T-cell (primary cell): ENCODE measurements at regions of chr2 and their contacts with region 1.

Region 1: DNA sequence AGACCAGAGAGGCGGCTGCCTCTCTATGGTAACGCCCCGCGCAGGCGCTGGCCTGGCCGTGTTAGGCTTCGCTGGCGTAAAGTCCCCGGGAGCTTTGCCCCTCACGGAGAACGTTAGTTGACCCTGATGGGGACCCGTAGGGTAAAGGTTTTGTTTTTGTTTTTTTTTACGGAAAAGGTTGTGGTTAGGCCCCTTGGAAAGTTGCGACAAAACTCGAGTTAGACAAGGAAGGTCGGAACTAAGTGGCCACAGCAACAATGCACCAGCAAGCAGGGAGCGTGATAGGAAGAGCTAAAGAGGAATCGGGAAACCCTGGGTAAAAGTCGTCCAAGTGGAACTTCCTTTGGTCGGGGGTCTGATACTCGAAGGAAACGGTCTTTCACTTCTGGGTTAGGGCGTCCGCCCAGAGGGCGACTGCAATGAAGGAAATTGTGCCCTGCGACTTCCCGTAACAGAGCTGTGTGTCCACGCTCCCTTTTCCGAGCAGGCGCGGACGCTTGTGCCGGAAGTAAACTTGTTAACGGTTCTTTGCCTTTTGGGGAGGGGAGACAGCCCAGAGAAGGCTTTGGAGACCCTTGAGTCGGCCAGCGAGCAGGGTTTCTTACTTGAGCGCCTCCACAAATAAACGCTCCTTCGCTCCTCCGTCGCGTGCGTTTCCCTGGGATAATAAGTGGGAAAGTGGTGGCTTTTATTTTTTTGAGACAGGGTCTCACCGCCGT is 493 bp upstream of the CLASP1 start:
- DNase-seq: peak; percentile 83 to 99 (median 97)
- ATAC-seq: peak; percentile 93 to 96 (median 94)
- H3K4me3 ChIP-seq: peak overlapping the region; percentile 71 to 92
- H3K4me3 Mint-ChIP-seq: peak overlapping the region; percentile 95 to 97 (median 96)
- H3K27ac ChIP-seq: peak overlapping the region; percentile 90
- H3K27ac Mint-ChIP-seq: peak overlapping the region; percentile 99 to 100
- H3K4me1 ChIP-seq: peaks cover 20 to 26% of the 10 kb centered on the region in 2 experiments
- H3K4me1 Mint-ChIP-seq: peaks cover 68 to 86% (median 74%) of the 10 kb centered on the region in 3 donors
- H3K27me3 ChIP-seq: no peaks in the 10 kb centered on the region
- H3K27me3 Mint-ChIP-seq: no peaks in the 10 kb centered on the region

Region 2: DNA sequence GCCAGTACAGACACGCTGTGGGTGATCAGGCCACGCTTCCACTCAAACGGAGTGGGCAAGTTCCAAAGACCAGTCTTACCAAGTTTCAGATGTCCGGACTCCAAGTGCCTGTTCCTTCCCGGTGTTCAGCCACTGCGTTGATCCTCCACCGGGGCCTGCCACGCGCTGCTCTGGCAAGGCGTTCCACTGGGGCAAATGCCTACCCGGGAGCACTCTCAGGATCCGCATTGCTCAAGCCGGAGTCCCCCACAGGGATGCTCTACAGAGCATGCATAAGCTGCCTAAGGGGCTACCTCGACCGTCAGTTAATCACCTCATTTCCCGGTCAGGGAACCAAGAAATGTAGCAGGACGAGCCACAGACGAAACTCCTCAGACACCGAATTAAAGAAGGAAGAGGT is 36.5 kb after region 1 on chr2:
- CTCF ChIA-PET with region 1: no interaction called
- POLR2A ChIA-PET with region 1: no interaction called
- DNase-seq: no peak
- ATAC-seq: no peak
- H3K4me3 ChIP-seq: no peak overlapping the region
- H3K4me3 Mint-ChIP-seq: no peak overlapping the region
- H3K27ac ChIP-seq: no peak overlapping the region
- H3K27ac Mint-ChIP-seq: no peak overlapping the region
- H3K4me1 ChIP-seq: no peaks in the 10 kb centered on the region
- H3K4me1 Mint-ChIP-seq: peaks cover 0 to 2% (median 0%) of the 10 kb centered on the region in 3 donors
- H3K27me3 ChIP-seq: peaks cover 0 to 2% of the 10 kb centered on the region in 2 experiments
- H3K27me3 Mint-ChIP-seq: no peaks in the 10 kb centered on the region

Region 3: DNA sequence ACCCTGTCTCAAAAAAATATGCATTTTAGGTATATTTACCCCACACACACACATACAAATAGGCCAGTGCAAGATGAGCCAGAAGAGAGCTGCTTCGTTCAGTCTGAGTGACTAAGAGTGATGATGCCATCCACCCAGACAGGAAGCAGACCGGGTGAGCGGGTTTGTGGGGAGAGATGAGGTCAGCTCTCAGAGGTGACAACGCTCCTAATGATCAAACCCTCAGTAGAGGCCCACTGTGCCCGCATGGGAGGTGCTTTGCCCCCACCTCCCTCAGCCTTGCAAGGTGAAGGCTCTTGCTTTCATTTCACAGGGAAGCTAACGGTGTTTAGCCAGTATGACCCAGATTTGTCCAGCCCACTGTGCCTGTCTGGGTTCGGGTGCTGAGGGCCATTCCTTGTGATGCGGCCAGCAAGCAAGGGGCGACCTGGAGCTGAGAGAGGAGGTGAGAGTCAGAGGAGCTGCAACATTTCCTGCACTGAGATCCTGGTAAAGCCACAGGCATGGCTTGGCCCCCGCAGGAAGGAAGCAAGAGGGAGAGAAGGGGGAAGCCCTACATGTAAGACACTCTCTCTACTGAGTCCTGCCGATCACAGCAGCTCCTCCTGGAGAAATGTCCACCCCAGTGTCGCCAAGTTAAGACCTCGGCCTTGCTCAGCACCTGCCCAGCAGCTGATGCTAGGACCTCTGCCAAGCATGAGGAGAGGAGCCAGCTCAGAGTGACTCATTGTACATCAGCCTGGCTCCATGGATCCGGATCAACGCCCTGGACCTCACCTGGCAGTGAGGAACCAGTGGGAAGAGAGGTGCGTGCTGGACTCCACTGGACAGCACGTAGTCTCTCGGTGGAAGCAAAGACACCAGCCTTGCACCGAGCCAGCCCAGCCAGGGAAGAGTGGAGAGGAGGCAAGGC is 49.9 kb after region 1 on chr2:
- CTCF ChIA-PET with region 1: interaction called in 1 of 2 experiments, 23 read pairs
- POLR2A ChIA-PET with region 1: interaction called, 3 to 9 read pairs
- DNase-seq: peak; percentile 51 to 90 (median 77)
- ATAC-seq: peak; percentile 97 to 98 (median 98)
- H3K4me3 ChIP-seq: peak overlapping the region; percentile 41 to 64
- H3K4me3 Mint-ChIP-seq: peak overlapping the region; percentile 70 to 80 (median 75)
- H3K27ac ChIP-seq: peak overlapping the region; percentile 94
- H3K27ac Mint-ChIP-seq: peak overlapping the region; percentile 95
- H3K4me1 ChIP-seq: peaks cover 6 to 28% of the 10 kb centered on the region in 2 experiments
- H3K4me1 Mint-ChIP-seq: peaks cover 30 to 46% (median 41%) of the 10 kb centered on the region in 3 donors
- H3K27me3 ChIP-seq: no peaks in the 10 kb centered on the region
- H3K27me3 Mint-ChIP-seq: no peaks in the 10 kb centered on the region